ENCODE measurements at regions of chr20 and their contacts with region 1.

Region 1: DNA sequence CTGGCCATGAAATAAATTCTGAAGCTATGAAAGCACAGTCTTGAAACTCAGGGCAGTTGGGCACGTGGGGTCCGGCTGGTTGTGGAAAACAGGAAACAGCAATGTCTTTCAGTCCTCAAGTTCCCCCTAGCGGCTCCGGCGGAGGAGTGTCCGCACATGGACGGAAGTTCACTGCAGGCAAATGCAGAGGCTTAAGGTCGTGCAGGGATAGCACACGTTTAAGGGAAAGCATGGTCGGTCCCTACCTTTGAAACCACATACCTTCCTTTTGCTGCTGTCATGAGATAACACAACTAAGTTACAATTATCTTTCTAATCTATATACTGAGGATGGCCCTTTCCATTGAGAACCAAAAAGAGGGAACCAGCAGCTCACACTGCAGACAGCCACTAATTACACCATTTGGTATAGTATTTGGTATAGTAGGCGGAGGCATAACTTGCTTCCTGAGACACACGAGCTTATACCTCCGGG is 52.6 kb upstream of the NFATC2 start:
- DNase-seq: peak; percentile 91
- ATAC-seq: peak; percentile 94
- H3K4me3 Mint-ChIP-seq: peak overlapping the region; percentile 40
- H3K27ac Mint-ChIP-seq: peak overlapping the region; percentile 86
- H3K4me1 Mint-ChIP-seq: peaks cover 53% of the 10 kb centered on the region
- H3K27me3 Mint-ChIP-seq: peaks cover 6% of the 10 kb centered on the region
- CTCF ChIP-seq: peak; percentile 94

Region 2: GRCh38 chr20:51372176-51372803 is 222.8 kb before region 1 on chr20:
- CTCF ChIA-PET with region 1: interaction called, 47 read pairs
- POLR2A ChIA-PET with region 1: no interaction called
- intact Hi-C with region 1: loop called (anchors 2 kb)
- DNase-seq: peak; percentile 75
- ATAC-seq: peak; percentile 87
- H3K4me3 Mint-ChIP-seq: no peak overlapping the region
- H3K27ac Mint-ChIP-seq: no peak overlapping the region
- H3K4me1 Mint-ChIP-seq: peaks cover 4% of the 10 kb centered on the region
- H3K27me3 Mint-ChIP-seq: no peaks in the 10 kb centered on the region
- CTCF ChIP-seq: peak; percentile 77

Region 3: DNA sequence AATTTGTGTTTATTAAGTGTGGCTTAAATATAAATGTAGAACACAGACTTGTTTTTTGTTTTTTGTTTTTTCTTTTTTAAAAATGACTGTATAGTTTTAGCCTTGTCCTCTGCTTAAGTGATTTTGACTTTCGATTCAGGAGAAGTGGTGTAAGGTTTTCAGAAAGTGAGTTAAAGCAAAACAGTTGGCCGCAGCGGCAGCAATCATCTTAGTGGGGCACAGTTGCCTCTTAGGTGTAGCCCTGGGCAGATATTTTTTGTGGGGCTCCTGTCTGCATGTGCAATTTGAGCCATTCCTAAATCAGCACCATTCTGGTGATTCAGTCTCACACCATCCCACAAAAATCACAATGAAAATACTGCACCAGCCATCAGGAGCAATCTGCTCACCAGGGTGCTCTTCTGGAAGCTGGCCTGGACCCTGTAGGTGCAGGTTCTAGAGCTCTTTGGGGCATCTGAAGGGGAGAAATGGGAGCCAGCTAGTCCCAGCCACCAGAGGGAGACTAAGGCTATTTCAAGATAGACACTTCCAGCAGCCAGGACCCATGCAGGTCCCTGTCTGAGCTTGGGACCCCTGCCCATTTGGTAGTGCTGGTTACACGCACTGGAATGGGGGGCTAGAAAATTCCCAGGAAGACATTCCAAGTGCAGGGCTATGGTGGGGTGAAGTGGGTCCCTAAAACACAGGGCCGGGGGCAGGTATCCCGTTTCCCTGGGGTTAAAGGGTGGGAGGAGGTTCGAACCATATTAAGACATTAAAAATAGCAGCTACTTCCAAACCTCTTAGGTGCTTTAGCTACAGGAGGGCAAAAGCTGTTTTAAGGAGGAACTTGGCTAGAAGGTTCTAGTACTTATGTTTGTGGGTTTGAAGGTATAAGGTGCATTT is 209.2 kb before region 1 on chr20:
- CTCF ChIA-PET with region 1: interaction called, 18 read pairs
- POLR2A ChIA-PET with region 1: interaction called, 3 read pairs
- intact Hi-C with region 1: no loop called
- DNase-seq: peak; percentile 47
- ATAC-seq: no peak
- H3K4me3 Mint-ChIP-seq: no peak overlapping the region
- H3K27ac Mint-ChIP-seq: peak overlapping the region; percentile 21
- H3K4me1 Mint-ChIP-seq: peaks cover 68% of the 10 kb centered on the region
- H3K27me3 Mint-ChIP-seq: no peaks in the 10 kb centered on the region
- CTCF ChIP-seq: peak; percentile 66

Region 4: GRCh38 chr20:51507216-51508036 is 87.7 kb before region 1 on chr20:
- CTCF ChIA-PET with region 1: interaction called, 14 read pairs
- POLR2A ChIA-PET with region 1: interaction called, 9 read pairs
- intact Hi-C with region 1: no loop called
- DNase-seq: no peak
- ATAC-seq: no peak
- H3K4me3 Mint-ChIP-seq: no peak overlapping the region
- H3K27ac Mint-ChIP-seq: no peak overlapping the region
- H3K4me1 Mint-ChIP-seq: peaks cover 60% of the 10 kb centered on the region
- H3K27me3 Mint-ChIP-seq: no peaks in the 10 kb centered on the region
- CTCF ChIP-seq: no peak

Region 5: GRCh38 chr20:51547951-51548350 is 47.1 kb before region 1 on chr20:
- CTCF ChIA-PET with region 1: interaction called, 49 read pairs
- POLR2A ChIA-PET with region 1: interaction called, 6 read pairs
- intact Hi-C with region 1: loop called (anchors 5 kb)
- DNase-seq: no peak
- ATAC-seq: no peak
- H3K4me3 Mint-ChIP-seq: no peak overlapping the region
- H3K27ac Mint-ChIP-seq: no peak overlapping the region
- H3K4me1 Mint-ChIP-seq: peaks cover 4% of the 10 kb centered on the region
- H3K27me3 Mint-ChIP-seq: peaks cover 4% of the 10 kb centered on the region
- CTCF ChIP-seq: no peak

Region 6: DNA sequence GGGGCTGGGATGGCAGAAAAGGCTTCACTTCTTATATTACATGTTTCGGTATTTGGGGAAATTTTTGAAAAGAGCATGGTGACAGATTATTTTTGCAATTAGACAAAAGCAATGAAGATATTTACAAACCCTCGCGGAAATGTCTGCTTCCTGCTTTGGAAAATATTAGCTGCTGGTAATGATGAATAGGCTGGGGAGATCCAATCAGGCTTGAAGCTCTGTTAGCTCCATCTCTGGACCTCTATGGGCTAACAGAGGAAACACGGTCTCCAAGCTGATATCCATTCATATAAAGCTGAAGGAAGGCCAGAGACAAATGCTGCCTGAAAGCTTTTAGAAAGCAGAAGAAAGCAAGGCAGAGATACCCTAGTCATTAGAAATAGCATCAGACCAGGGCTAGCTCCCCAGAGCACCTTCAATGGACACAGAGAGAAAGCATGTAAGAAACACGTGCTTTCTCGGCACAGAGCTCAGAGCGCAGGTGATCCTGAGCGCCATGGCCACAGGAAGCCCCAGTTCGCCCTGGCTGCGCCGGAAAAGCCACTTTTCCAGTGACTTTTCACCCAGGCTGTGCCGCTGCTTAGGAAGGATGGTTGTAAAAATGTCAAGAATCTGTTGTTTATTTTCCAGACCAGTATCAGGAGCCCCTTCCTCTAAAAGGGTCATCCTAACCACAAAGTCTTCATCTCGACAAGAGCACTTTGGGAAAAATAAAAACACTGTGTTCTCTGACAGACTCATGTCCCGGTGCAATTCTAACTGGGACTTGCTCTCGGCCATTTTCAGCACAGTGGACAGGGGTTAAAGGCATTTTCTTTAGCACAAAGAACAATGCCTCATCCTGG is 15.9 kb after region 1 on chr20:
- CTCF ChIA-PET with region 1: interaction called, 14 read pairs
- POLR2A ChIA-PET with region 1: interaction called, 3 read pairs
- intact Hi-C with region 1: no loop called
- DNase-seq: no peak
- ATAC-seq: no peak
- H3K4me3 Mint-ChIP-seq: no peak overlapping the region
- H3K27ac Mint-ChIP-seq: no peak overlapping the region
- H3K4me1 Mint-ChIP-seq: peaks cover 22% of the 10 kb centered on the region
- H3K27me3 Mint-ChIP-seq: peaks cover 5% of the 10 kb centered on the region
- CTCF ChIP-seq: no peak